MCF 10A (cell line): ENCODE measurements at regions of chr6 and their contacts with region 1.

Region 1: DNA sequence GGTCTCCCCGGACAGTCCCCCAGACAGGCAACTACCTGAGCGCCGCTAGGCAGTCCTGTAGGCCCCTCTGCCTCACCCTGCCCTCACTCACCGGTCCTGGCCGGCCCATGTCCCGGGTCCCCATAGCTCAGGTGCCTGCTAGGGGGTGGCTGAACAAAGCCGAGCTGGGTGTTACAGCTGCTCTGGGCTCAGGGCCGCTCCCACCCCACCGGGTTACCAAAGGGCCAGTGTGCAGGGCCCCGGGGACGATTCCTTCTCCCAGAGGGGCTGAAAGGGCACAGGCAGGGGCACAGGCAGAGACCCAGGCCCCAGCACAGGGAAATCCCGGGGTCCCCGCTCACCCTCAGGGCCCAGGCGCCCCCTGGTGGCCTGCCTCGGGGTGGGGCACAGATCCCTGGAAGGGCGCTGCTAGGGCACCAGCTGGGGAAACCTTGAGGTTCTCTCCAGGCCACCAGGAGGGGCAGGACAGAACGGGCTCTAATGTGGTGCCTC is 118.4 kb downstream of the GRM4 start:
- DNase-seq: peak; percentile 47
- H3K4me3 Mint-ChIP-seq: no peak overlapping the region
- H3K27ac Mint-ChIP-seq: no peak overlapping the region
- H3K4me1 Mint-ChIP-seq: no peaks in the 10 kb centered on the region
- H3K27me3 Mint-ChIP-seq: peaks cover 24% of the 10 kb centered on the region
- CTCF ChIP-seq: peak; percentile 85

Region 2: GRCh38 chr6:33744001-33744848 is 283.3 kb before region 1 on chr6:
- CTCF ChIA-PET with region 1: interaction called, 3 read pairs
- POLR2A ChIA-PET with region 1: no interaction called
- intact Hi-C with region 1: loop called (anchors 1 kb)
- DNase-seq: peak; percentile 97
- H3K4me3 Mint-ChIP-seq: peak overlapping the region; percentile 3
- H3K27ac Mint-ChIP-seq: no peak overlapping the region
- H3K4me1 Mint-ChIP-seq: peaks cover 45% of the 10 kb centered on the region
- H3K27me3 Mint-ChIP-seq: no peaks in the 10 kb centered on the region
- CTCF ChIP-seq: peak; percentile 74

Region 3: DNA sequence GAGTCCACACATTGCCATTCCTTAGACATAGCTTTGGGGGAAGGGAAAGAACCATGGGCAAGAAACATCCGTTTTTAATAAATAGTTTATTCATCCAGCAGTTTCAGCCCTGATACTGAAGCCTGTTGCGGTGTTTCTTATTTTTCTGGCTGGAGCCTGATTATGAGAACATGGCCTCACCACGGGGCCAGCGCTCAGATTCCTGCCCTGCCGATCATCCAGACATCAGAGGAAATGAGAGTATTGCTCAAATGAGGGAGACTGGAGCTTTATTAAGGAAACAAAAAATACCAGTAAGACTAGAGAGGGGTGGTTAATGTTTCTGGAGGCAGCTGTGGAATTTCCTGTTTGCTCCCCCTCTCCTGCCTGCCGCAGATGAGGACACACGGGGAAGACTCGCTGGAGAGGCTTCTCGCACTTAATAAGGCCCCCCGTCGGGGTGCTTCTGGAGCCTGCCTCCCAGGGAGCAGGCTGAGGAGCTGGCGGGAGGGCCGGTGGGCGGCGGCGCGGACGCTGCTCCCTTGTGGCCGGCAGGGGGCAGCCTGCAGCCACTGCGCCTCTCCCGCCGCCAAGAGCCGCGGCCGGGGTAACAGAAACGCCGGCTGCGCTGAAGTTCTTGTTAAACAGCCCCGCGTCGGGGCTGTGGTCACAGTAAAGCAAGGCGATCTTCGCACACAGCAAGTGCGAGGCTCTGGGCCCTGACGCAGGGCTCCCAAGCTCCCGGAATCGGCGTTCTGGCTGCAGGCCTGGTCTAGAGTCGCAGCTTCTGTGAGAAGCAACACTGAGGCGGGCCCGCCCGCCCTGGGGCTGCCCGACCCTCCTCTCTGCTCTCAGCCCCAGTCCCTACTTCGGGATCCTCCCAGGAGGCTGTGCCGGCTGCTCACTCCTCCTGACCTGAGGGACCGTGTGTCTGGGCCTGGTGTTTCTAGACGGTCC is 256.1 kb before region 1 on chr6:
- CTCF ChIA-PET with region 1: interaction called, 28 read pairs
- POLR2A ChIA-PET with region 1: interaction called, 11 read pairs
- intact Hi-C with region 1: loop called (anchors 1 kb)
- DNase-seq: peak; percentile 69
- H3K4me3 Mint-ChIP-seq: no peak overlapping the region
- H3K27ac Mint-ChIP-seq: no peak overlapping the region
- H3K4me1 Mint-ChIP-seq: no peaks in the 10 kb centered on the region
- H3K27me3 Mint-ChIP-seq: no peaks in the 10 kb centered on the region
- CTCF ChIP-seq: peak; percentile 90

Region 4: DNA sequence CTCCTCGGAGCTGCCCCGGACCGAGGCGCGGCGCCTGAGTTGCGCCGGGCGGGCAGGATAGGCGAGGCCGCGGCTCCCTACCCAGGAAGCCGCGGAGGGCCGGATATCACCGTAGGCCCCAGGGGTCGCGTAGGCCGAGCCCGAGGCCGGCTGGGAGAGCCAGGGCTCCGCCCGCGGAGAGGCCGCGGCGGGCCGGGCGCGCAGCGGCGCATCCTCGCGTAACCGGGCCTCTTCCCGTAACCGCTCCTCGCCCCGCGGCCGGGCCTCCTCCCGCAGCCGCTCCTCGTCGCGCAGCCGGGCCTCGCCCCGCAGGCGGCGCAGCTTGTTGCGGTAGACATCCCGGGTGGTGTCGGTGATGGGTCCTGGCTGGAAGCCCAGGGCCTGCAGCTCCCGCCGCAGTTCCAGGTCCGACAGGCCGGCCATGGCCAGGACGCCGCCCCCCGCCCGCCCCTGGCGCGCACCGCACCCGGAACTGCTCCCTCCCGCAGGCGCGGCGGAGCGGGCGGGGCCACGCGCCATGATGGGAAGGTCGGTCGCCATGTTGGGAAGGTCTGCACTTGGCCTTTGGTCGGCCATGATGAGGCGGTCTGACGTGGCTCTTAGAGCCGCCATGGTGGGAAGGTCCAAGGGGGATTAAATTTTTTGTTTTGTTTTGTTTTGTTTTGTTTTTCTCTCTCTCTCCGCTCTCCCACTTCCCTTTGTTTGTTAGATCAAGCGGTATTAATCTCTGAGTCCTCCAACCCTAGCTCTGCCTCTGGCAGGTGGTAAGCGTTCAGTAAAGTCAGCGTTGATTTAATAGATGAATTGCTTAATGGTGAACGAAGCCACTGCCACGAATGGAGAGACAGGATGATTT is 238.6 kb before region 1 on chr6 and contains the start of gene LEMD2:
- CTCF ChIA-PET with region 1: interaction called, 5 read pairs
- POLR2A ChIA-PET with region 1: no interaction called
- intact Hi-C with region 1: loop called (anchors 5 kb)
- DNase-seq: peak; percentile 90
- H3K4me3 Mint-ChIP-seq: peak within 1 kb of the TSS; percentile 84
- H3K27ac Mint-ChIP-seq: peak within 1 kb of the TSS; percentile 92
- H3K4me1 Mint-ChIP-seq: peaks cover 21% of the 10 kb centered on the region
- H3K27me3 Mint-ChIP-seq: peaks cover 17% of the 10 kb centered on the region
- CTCF ChIP-seq: no peak
- total RNA-seq, gene LEMD2: 70.5 and 79.2 TPM in 2 replicates

Region 5: DNA sequence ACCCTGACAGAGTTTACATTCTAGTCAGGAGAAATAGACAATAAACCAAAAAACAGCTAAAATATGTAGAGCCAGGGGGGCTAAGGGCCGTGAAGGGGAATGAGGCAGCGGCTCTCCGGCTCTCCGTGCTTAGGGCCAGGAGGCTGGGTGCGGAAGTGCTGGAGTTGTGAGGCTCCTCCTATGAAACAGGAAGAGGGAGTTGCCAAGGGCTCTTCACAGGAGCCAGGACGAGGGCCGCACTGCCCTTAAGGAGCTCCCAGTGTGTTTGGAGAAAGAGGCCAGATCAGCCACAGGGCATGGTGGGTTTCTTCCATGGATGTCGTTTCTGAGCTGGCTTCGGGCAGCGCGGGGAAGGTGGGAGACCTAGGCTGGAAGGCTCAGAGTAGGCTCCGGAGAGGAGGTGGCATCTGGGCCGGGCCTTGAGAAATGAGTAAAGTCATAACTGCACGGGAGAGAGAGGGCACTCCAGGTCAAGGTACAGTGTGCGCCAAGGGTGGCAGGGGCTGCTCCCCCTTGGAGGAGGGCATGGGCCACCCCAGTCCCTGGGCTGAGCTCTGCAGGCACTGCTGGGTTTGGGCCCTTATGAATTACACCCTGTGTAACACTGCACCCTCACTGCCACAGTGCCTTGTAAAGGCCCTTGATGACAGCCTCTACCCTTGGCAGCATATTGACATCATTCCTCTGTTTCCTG is 202.9 kb before region 1 on chr6:
- CTCF ChIA-PET with region 1: no interaction called
- POLR2A ChIA-PET with region 1: no interaction called
- intact Hi-C with region 1: loop called (anchors 1 kb)
- DNase-seq: peak; percentile 73
- H3K4me3 Mint-ChIP-seq: peak overlapping the region; percentile 83
- H3K27ac Mint-ChIP-seq: peak overlapping the region; percentile 99
- H3K4me1 Mint-ChIP-seq: peaks cover 12% of the 10 kb centered on the region
- H3K27me3 Mint-ChIP-seq: peaks cover 2% of the 10 kb centered on the region
- CTCF ChIP-seq: no peak

Region 6: DNA sequence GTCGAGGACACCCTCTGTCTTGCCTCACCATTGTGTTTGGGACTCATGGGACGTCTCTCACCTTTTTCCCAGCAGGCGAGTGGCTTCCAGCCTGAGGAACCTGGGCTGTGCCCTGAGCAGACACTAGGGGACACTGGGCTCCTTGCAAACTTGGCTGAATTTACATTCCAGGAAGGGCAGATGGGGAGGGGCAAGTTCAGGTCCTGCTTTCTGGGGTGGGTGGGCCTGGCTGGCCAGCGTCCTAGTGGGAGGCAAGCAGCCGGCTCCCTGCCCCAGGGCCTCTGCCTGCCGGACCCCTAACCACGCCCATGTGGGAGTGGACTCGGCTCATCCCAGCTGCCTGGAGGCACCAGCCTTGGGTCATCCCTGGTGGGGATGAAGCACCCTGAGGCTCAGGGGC is 175.5 kb before region 1 on chr6:
- CTCF ChIA-PET with region 1: interaction called, 3 read pairs
- POLR2A ChIA-PET with region 1: no interaction called
- intact Hi-C with region 1: loop called (anchors 1 kb)
- DNase-seq: peak; percentile 38
- H3K4me3 Mint-ChIP-seq: no peak overlapping the region
- H3K27ac Mint-ChIP-seq: no peak overlapping the region
- H3K4me1 Mint-ChIP-seq: no peaks in the 10 kb centered on the region
- H3K27me3 Mint-ChIP-seq: no peaks in the 10 kb centered on the region
- CTCF ChIP-seq: peak; percentile 51

Region 7: DNA sequence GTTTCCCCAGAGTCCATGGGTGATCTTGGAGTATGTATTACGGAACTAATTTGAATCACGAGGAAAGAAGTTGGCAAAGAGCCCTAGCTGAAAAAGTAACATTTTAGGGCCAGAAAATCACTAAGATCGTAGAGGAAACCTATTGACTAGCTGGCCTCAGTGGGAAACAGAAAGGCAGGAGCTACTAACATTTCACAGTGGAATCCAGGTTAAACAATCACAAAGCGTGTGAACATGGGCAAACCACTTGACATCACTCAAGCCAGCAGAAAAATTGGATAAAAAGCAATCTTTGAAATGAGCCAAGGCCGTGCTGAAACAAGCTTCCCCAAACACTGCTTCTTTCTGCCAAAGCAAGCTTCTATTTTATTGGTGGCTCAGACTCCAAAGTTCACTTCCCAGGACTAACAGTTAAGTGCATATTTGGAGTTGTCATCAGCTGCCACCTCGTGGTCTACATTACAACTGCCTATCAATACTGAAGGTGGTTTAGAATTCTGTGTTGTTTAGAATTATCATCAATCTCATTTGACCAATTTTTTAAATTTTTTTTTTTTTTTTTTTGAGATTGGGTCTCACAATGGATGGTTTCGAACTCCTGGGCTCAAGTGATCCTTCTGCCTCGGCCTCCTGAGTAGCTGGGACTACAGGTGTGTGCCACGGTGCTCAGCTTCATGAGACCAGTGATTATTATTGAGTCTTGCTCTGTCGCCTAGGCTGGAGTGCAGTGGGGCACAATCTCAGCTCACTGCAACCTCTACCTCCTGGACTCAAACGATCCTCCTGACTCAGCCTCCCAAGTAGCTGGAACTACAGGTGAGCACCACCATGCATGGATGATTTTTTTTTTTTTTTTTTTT is 387.7 kb after region 1 on chr6:
- CTCF ChIA-PET with region 1: no interaction called
- POLR2A ChIA-PET with region 1: no interaction called
- intact Hi-C with region 1: no loop called
- DNase-seq: peak; percentile 68
- H3K4me3 Mint-ChIP-seq: no peak overlapping the region
- H3K27ac Mint-ChIP-seq: no peak overlapping the region
- H3K4me1 Mint-ChIP-seq: peaks cover 5% of the 10 kb centered on the region
- H3K27me3 Mint-ChIP-seq: no peaks in the 10 kb centered on the region
- CTCF ChIP-seq: peak; percentile 54